ENCODE measurements at regions of chr7 and their contacts with region 1.

Region 1: DNA sequence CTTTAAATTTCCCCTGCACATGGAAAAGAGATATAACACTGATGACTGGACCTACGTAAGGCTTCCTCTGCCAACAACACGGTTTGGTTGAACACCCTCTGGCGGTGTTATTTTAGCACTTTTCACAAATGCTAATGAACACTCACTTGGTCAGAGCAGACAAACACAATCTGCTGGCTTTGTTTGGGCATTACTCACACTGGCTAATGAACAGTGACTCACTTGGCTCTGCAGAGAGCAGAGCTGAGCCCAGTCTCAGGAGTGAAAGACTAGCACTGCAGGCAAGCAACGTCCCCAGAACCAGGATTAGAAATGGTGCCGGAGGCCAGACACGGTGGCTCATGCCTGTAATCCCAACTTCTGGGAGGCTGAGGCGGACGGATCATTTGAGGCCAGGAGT is 430.8 kb downstream of the PLXNA4 start:
- DNase-seq: peak in 8 of 10 donors; percentile 49 to 79 (median 63)
- H3K4me3 ChIP-seq: no peak overlapping the region
- H3K27ac ChIP-seq: peak overlapping the region in 7 of 59 donors; percentile 36 to 78 (median 51)
- H3K27me3 ChIP-seq: peaks cover 0 to 9% (median 0%) of the 10 kb centered on the region in 45 donors
- CTCF ChIP-seq: peak in 17 of 56 donors; percentile 7 to 31 (median 22)

Region 2: GRCh38 chr7:131879424-131879823 is 266.0 kb before region 1 on chr7:
- intact Hi-C with region 1: no loop called
- DNase-seq: peak in 4 of 10 donors; percentile 24 to 57 (median 36)
- H3K4me3 ChIP-seq: no peak overlapping the region
- H3K27ac ChIP-seq: peak overlapping the region in 15 of 59 donors; percentile 7 to 69 (median 34)
- H3K27me3 ChIP-seq: peaks cover 0 to 6% (median 0%) of the 10 kb centered on the region in 45 donors
- CTCF ChIP-seq: no peak

Region 3: DNA sequence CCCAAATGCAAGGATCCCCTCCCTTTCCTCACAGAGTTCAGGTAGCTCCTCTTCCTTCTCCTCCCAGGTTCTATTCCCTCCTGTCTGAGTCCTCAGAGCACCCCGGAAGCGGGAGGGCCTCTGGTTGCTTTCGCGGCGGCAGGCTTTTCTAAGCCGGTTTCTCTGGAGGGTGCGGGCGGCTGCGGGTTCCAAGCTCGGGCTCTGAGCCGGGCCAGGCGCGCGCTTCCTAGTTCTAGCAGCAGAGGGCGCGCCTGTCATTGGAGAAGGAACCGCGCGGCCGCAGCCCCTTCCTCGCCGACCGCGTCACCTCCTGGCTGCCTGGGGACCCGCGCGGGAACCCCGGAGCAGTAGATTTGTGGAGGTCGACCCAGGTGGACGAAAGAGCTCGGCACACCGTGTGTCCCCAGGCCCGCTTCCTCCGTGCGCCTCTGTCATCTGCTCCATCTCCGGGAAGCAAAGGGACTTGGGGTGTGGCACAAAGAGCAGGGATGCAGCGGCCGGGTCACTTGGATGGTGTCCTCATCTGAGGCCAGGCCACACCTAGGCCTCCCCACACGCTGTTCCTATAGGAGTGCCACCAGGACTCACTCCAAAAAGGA is 200.1 kb before region 1 on chr7:
- intact Hi-C with region 1: loop called (anchors 5 to 10 kb)
- DNase-seq: peak; percentile 40 to 76 (median 61)
- H3K4me3 ChIP-seq: peak overlapping the region; percentile 5 to 66 (median 48)
- H3K27ac ChIP-seq: peak overlapping the region in 2 of 59 donors; percentile 46 to 61
- H3K27me3 ChIP-seq: peaks cover 0 to 18% (median 0%) of the 10 kb centered on the region in 45 donors
- CTCF ChIP-seq: peak; percentile 53 to 94 (median 87)

Region 4: GRCh38 chr7:131950758-131951157 is 194.7 kb before region 1 on chr7:
- intact Hi-C with region 1: loop called (anchors 5 to 10 kb)
- DNase-seq: no peak
- H3K4me3 ChIP-seq: no peak overlapping the region
- H3K27ac ChIP-seq: peak overlapping the region in 14 of 59 donors; percentile 19 to 79 (median 63)
- H3K27me3 ChIP-seq: peaks cover 0 to 6% (median 0%) of the 10 kb centered on the region in 45 donors
- CTCF ChIP-seq: no peak

Region 5: DNA sequence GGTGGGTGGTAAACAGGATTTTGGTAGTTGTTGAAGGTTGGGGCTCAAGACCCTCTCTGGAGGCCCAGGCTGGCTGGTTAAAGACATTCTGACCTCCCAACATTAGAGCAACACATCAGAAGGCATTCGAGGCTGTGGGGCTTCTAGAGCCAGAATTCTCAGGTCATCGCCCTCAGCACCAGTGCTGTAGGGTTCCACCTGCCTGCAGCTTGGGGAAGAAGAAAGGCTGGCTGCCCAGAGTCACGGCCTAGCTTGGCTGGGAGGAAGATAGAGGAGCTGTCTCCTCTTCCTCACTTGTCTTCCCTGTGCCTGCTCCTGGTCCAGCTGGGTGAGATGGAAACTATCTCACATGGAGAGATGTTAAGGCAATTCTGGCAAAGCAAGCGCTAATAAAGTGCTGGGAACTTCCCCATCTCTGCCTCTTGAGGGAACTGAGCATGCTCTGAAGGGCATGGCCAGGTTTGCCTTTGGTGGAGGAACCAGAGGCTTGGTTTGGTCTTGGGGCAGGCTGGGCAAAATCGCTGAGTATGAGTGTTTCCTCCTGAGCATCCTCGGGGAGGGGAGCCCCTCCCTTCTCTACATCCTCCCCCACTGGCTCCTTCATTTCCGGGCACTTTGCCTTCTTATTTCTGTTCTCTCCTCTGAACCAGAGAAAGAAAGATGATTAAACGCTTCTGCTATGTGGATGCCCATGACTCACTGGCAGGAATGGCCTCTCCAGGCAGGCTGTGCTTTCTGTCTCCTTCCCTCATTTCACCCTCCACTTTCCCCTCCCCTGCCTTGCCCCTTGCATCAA is 80.1 kb before region 1 on chr7:
- intact Hi-C with region 1: loop called in 1 of 2 experiments (anchors 10 kb)
- DNase-seq: peak in 6 of 10 donors; percentile 42 to 75 (median 58)
- H3K4me3 ChIP-seq: no peak overlapping the region
- H3K27ac ChIP-seq: peak overlapping the region in 44 of 59 donors; percentile 0 to 78 (median 50)
- H3K27me3 ChIP-seq: no peaks in the 10 kb centered on the region
- CTCF ChIP-seq: no peak

Measured in dorsolateral prefrontal cortex (tissue), 120 donors.